ENCODE measurements at regions of chr10 and their contacts with region 1.

Region 1: GRCh38 chr10:116385994-116386809 is 41.4 kb upstream of the PNLIPRP3 start:
- DNase-seq: peak; percentile 33
- H3K4me3 ChIP-seq: no peak overlapping the region
- H3K27ac ChIP-seq: no peak overlapping the region
- H3K4me1 ChIP-seq: no peaks in the 10 kb centered on the region
- H3K27me3 ChIP-seq: no peaks in the 10 kb centered on the region
- CTCF ChIP-seq: peak; percentile 46 to 61

Region 2: DNA sequence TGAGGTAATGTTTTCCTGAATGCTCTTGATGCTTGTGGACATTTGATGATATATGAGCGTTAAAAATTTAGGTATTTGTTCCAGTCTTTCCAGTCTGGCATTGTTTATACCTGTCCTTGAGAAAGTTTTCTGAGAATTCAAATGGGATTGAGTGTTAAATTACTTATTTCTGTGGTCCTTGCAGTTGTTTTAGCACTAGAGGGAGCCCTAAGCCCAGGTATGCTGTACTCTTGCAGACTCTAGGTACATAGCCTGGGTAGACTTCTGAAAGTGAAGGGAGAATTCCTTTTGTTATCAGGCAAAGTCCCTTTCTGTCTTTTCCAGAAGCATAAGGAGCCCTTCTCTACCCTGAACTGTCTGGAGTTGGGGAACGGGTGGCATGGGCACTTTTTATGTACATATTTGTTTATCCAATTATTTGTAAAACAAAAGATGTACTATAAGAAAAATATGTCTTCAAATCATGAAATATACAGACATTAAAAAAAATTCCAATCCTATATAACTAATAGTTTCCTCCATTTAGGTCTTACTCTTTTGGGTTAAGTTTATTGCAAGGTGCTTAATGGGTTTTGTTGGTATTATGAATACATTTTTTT is 1030.9 kb before region 1 on chr10:
- CTCF ChIA-PET with region 1: no interaction called
- dilution Hi-C with region 1: no loop called
- in situ Hi-C with region 1: no loop called
- intact Hi-C with region 1: loop called (anchors 5 kb)
- DNase-seq: peak; percentile 50
- H3K4me3 ChIP-seq: no peak overlapping the region
- H3K27ac ChIP-seq: no peak overlapping the region
- H3K4me1 ChIP-seq: no peaks in the 10 kb centered on the region
- H3K27me3 ChIP-seq: no peaks in the 10 kb centered on the region
- CTCF ChIP-seq: peak; percentile 70 to 89

Region 3: DNA sequence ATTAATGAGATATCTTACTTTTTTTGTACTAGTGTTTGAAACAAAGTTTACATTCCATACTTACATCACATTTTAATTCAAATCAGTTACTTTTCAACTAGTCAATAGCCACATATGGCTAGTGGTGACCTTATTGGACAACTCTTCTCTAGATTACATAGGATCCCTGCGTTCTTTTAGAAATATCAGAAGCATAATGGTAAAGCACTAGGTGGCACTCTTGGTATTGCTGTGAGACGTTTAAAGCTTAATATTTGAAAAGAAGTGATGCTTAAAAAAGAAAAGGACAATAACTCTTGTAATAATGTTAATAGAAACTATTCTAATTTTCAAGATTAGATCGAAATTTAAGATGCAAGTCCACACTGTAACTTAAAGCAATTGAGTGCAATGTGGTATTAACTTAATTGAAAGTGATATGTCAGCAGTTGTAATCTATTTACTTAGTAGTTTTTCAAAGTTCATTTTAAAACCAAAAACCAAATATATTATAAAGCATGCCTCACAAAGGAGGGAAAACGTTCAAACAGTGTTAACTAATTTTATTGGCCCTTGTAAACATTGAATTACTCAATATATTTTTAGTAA is 953.9 kb before region 1 on chr10:
- CTCF ChIA-PET with region 1: no interaction called
- dilution Hi-C with region 1: no loop called
- in situ Hi-C with region 1: no loop called
- intact Hi-C with region 1: loop called (anchors 10 kb)
- DNase-seq: peak; percentile 8
- H3K4me3 ChIP-seq: no peak overlapping the region
- H3K27ac ChIP-seq: no peak overlapping the region
- H3K4me1 ChIP-seq: no peaks in the 10 kb centered on the region
- H3K27me3 ChIP-seq: no peaks in the 10 kb centered on the region
- CTCF ChIP-seq: peak; percentile 41 to 56

Region 4: DNA sequence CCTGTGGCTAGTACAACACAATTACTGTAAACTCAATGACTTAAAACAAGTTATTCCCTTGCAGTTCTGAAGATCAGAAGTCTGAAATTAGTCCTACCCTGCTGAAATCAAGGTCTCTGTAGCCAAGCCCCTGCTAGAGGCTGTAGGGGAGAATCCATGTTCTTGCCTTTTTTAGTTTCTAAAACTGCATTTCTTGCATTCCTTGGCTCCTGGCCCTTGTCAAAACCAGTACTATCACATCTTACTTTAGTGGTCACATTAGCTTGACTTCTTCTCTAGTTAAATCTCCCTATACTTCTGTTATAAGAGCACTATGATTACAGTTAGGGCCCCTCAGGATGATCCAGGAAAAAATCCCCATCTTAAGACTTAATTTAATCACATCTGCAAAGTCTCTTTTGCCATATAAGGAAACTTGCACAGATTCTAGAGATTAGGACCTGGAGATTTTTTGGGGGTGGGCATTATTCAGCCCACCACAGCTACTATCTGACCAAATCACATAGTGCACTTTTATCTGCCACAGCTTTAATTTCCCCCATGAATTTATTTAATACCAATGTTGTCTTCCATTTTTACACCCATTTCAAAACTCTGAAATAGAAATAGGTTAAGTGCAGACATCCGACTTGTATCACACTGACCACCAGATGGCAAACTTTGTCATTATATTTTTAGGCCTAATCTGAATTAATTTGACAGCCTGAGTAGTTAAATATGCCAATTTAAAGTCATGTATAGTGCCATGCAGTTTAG is 680.0 kb before region 1 on chr10:
- CTCF ChIA-PET with region 1: no interaction called
- dilution Hi-C with region 1: no loop called
- in situ Hi-C with region 1: no loop called
- intact Hi-C with region 1: loop called (anchors 1 kb)
- DNase-seq: peak; percentile 1
- H3K4me3 ChIP-seq: no peak overlapping the region
- H3K27ac ChIP-seq: no peak overlapping the region
- H3K4me1 ChIP-seq: no peaks in the 10 kb centered on the region
- H3K27me3 ChIP-seq: no peaks in the 10 kb centered on the region
- CTCF ChIP-seq: peak; percentile 50 to 53

Region 5: GRCh38 chr10:115801992-115802391 is 584.2 kb before region 1 on chr10:
- CTCF ChIA-PET with region 1: no interaction called
- dilution Hi-C with region 1: no loop called
- in situ Hi-C with region 1: no loop called
- intact Hi-C with region 1: loop called (anchors 1 kb)
- DNase-seq: no peak
- H3K4me3 ChIP-seq: no peak overlapping the region
- H3K27ac ChIP-seq: no peak overlapping the region
- H3K4me1 ChIP-seq: no peaks in the 10 kb centered on the region
- H3K27me3 ChIP-seq: no peaks in the 10 kb centered on the region
- CTCF ChIP-seq: no peak

Region 6: DNA sequence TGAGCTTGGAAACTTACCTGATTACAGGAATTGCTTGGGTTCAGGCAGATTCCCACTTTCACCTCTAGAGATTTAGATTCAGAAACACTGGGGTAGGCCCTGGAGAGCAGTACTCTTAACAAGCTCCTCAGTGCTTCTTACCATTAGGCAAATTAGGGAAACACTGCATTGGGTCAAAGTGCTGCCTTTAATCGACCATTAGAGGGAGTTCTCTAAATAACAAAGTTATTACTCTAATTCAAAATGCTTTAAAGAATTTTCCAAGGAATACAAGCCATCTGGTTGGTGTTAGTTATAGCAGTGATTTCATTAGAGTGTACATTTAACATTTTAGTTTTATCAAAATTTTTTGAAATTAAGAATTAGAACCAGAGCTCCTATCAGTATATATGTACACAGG is 437.7 kb before region 1 on chr10:
- CTCF ChIA-PET with region 1: interaction called, 4 read pairs
- dilution Hi-C with region 1: no loop called
- in situ Hi-C with region 1: no loop called
- intact Hi-C with region 1: loop called (anchors 5 kb)
- DNase-seq: no peak
- H3K4me3 ChIP-seq: no peak overlapping the region
- H3K27ac ChIP-seq: no peak overlapping the region
- H3K4me1 ChIP-seq: no peaks in the 10 kb centered on the region
- H3K27me3 ChIP-seq: no peaks in the 10 kb centered on the region
- CTCF ChIP-seq: peak in 1 of 2 donors; percentile 42

Region 7: DNA sequence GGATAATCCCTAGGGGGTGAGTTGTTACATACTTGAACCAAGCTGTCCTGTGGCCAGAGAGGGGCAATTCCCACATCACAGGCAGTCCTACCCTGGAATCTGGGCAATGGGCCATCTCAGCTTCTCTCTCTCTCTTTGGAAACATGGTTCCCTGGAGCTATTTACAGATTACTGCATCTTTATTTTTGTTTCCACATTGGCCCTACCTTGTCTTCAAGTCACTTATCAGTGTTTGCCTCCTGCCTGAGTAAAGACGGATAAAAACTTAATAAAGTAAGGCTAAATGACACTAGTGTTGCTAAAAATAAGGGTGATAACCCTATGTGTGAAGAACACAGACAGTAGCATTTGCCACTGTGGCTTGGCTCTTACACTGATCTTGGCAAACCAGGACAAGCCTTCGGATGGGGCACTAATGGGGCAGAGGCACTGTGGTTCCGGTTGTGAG is 341.4 kb before region 1 on chr10:
- CTCF ChIA-PET with region 1: no interaction called
- dilution Hi-C with region 1: no loop called
- in situ Hi-C with region 1: no loop called
- intact Hi-C with region 1: no loop called
- DNase-seq: no peak
- H3K4me3 ChIP-seq: no peak overlapping the region
- H3K27ac ChIP-seq: no peak overlapping the region
- H3K4me1 ChIP-seq: no peaks in the 10 kb centered on the region
- H3K27me3 ChIP-seq: no peaks in the 10 kb centered on the region
- CTCF ChIP-seq: no peak

Region 8: DNA sequence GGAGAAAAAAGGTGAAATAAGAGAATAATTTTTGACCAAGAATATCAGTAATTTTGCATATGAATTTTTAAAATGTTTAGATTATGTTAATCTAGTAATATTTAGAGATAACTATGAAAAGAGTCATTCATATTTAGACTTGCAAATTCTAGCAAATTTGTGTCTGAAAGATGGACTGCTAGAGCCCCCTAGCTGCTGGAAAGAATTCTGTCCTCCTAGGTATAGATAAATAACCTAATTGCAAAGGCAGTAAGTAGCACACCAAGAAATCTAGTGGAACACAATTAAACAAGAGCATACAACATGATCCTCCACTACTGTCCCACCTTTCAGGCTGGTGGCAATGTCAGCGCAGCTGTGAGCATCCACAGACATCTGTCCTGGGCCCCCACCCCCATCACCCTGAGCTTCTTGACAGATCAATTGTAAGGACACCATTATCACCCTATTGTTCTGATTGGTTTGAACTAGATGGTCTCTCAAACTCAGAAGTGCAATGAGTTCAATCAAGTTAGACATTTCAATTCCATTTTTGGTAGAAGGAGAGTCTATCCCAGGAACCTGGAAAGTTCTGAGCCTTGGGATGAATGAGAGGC is 98.2 kb before region 1 on chr10:
- CTCF ChIA-PET with region 1: no interaction called
- dilution Hi-C with region 1: no loop called
- in situ Hi-C with region 1: no loop called
- intact Hi-C with region 1: loop called (anchors 2 kb)
- DNase-seq: no peak
- H3K4me3 ChIP-seq: no peak overlapping the region
- H3K27ac ChIP-seq: no peak overlapping the region
- H3K4me1 ChIP-seq: no peaks in the 10 kb centered on the region
- H3K27me3 ChIP-seq: no peaks in the 10 kb centered on the region
- CTCF ChIP-seq: peak; percentile 70 to 72

Region 9: DNA sequence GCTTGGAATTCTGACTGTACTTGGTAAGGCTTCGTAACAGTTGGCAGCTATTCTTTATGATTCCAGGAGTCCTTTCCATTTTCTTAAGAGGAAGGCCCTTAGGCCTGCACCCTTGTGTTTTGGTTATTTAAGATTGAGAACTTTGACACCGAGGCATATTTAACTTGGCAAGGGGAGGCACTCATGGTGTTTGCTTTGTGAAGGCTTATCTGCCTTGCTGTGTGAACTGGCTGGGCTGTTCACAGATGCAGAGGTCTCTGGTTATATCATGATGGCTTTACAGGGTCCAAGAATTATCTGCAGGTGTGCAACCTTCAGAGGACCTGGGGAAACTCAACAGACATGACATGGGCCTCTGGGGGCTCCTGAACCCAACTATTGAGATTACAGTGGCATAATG is 203.7 kb after region 1 on chr10:
- CTCF ChIA-PET with region 1: no interaction called
- dilution Hi-C with region 1: no loop called
- in situ Hi-C with region 1: no loop called
- intact Hi-C with region 1: no loop called
- DNase-seq: no peak
- H3K4me3 ChIP-seq: no peak overlapping the region
- H3K27ac ChIP-seq: no peak overlapping the region
- H3K4me1 ChIP-seq: no peaks in the 10 kb centered on the region
- H3K27me3 ChIP-seq: no peaks in the 10 kb centered on the region
- CTCF ChIP-seq: no peak

Measured in mammary epithelial cell (primary cell).